ENCODE measurements at regions of chr2 and their contacts with region 1.

Region 1: GRCh38 chr2:74334931-74335333 is 8.3 kb downstream of the SLC4A5 start:
- DNase-seq: peak; percentile 9
- H3K4me3 ChIP-seq: no peak overlapping the region
- CTCF ChIP-seq: peak; percentile 94

Region 2: DNA sequence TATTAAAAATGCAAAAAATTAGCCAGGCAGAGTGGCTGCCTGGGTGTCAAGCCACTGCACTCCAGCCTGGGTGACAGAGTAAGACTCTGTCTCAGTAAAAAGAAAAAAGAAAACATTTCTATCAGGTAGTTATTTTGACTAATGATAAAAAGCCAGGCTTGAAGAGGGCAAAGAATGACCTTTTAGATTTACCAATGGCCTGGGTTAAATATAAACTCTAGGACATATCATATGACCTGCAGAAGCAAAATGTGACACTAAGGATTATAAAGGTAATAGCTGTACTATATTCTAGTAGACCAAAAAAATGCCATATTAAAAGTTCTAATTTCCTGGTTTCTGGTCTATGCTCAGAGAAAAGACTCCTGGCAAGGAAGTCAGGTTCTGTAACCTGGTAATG is 522.3 kb before region 1 on chr2:
- CTCF ChIA-PET with region 1: no interaction called
- POLR2A ChIA-PET with region 1: no interaction called
- DNase-seq: no peak
- H3K4me3 ChIP-seq: no peak overlapping the region
- CTCF ChIP-seq: no peak

Region 3: DNA sequence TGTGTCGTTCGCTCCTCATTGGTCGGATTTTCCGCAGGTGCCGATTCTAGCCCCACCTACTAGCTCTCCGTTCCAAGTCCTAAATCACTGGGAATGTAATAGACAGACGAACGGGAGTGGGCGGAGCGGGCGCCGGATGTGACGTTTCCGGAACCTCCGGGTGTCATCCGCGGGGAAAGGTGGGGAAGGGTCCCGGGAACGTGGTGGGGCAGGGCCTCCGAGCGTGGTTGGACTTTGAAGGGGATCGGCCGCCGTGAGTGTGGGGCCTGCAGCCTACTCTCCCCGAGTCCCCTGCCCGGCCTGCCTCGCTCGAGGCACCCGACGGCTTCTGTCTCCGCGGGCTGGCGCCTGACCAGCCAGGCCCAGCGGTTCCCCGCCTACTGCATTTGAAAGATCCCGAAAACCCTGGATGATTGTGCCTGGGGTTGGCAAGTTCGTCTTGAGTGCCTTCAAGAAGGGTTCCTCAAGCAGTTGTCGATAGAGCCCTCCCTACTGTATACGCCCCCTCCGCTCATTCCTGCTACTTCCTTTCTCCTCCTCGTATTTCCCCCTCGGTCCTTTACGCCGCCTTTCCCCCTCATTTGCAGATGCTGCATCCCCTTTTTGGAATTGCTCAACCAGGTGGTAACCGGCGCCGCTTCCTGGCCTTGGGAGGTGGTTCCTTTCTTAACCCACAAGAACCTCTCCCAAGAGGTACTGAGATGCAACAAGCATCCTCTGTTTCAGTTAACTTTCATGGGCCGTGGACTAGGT is 505.9 kb before region 1 on chr2 and contains the start of gene STAMBP:
- CTCF ChIA-PET with region 1: interaction called, 54 read pairs
- POLR2A ChIA-PET with region 1: no interaction called
- DNase-seq: peak; percentile 72
- H3K4me3 ChIP-seq: peak within 1 kb of the TSS; percentile 82
- CTCF ChIP-seq: no peak

Region 4: GRCh38 chr2:74198461-74199274 is 136.3 kb before region 1 on chr2 and contains the start of gene MTHFD2:
- CTCF ChIA-PET with region 1: no interaction called
- POLR2A ChIA-PET with region 1: no interaction called
- DNase-seq: peak; percentile 85
- H3K4me3 ChIP-seq: peak within 1 kb of the TSS; percentile 99
- CTCF ChIP-seq: peak; percentile 97

Region 5: DNA sequence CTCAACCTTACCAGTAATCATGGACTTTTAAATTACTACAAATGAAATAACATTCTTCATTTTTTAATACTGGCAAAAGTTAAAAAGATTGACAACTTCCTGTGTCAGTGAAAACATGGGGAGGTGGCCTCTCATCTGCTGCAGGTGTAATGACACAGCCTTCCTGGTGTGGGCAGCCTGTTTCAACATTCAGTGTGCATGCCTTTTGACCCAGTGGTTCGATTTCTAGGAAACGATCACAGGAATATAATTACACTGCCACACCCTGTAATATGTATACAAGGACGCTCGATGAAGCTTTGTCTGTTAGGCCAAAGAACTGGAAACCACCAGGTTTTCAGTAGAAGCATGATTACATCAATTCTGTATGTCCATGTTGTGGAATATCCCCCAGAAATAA is 67.9 kb before region 1 on chr2:
- CTCF ChIA-PET with region 1: interaction called, 19 read pairs
- POLR2A ChIA-PET with region 1: no interaction called
- DNase-seq: no peak
- H3K4me3 ChIP-seq: no peak overlapping the region
- CTCF ChIP-seq: no peak

Region 6: GRCh38 chr2:74357627-74358026 is 22.7 kb after region 1 on chr2:
- CTCF ChIA-PET with region 1: interaction called, 205 read pairs
- POLR2A ChIA-PET with region 1: no interaction called
- DNase-seq: no peak
- H3K4me3 ChIP-seq: no peak overlapping the region
- CTCF ChIP-seq: no peak

Region 7: DNA sequence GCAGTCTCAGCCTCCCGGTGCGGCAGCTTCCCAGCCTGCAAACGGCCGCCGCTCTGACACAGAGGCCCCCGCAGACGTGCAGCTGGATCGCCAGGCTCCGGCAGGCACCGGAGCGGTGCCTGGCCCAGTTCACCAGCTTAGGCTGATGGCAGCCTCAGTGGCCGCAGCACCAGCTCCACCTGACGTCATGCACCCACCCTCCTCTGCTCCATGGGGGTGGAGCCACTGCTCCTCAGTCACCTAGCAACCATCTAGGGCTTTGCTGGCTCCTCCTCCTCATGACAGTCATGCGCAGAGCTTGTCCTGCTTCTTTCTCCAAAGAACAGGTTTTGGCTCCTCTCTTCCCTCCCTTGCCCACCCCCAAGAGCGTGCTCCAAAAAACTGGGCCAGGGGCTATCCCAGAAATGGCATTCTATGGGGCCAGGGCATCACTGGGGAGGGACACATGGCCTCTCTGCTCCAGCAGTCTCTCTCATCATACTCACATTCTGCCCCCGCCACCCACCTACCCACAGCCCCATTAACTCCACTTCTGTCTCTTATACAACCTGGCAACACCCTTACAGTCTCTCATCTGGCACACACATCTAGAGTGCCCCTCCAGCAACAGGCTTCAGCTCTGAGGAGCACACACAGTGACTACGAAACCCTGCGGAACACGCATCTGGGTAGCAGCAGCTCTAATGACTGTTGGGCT is 39.7 kb after region 1 on chr2:
- CTCF ChIA-PET with region 1: interaction called, 27 read pairs
- POLR2A ChIA-PET with region 1: no interaction called
- DNase-seq: no peak
- H3K4me3 ChIP-seq: peak overlapping the region; percentile 23; the same call in 1 of the 2 replicates
- CTCF ChIP-seq: no peak

Region 8: DNA sequence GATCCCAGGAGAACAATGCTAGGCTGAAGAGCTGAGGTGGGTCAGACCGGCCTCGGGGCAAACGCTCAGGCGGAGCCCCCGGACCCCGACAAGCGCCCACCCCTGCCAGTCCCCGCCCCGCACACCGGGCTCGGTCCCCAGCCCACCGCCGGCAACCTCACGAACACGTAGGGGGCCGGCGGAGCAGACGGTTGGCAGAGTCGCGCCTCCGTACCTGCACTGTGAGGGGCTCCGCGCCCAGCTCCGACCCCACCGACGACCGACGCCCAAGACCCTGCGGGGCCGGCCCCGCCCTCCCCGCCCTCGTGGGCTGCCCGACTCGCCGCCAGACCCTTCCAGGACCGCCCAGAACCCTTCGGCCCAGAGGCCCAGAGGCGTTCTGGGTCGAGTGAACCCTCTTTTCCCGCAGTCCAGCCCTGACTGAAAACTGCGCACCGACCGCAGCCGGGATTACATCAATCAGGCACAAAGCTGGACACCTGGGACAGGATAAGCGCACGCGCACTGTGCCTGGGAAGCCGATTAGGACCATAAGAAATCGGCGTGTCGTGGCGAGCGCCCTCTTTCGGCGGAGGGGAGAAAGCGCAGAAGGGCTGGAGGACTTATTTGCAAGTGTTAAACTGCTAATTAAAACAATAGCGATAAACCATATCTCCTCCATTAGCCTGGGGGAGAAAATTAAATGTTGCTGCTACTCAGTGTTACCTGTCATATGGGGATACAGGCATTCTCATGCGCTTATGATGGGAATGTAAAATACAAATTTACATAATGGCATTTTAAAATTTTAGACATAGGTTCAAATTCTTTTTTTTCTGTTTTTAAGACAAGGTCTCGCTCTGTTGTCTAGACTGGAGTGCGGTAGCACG is 56.9 kb after region 1 on chr2:
- CTCF ChIA-PET with region 1: interaction called, 74 read pairs
- POLR2A ChIA-PET with region 1: no interaction called
- DNase-seq: peak; percentile 29
- H3K4me3 ChIP-seq: peak overlapping the region; percentile 72
- CTCF ChIP-seq: peak; percentile 90

Region 9: GRCh38 chr2:75241696-75242095 is 906.8 kb after region 1 on chr2:
- CTCF ChIA-PET with region 1: no interaction called
- POLR2A ChIA-PET with region 1: no interaction called
- DNase-seq: no peak
- H3K4me3 ChIP-seq: no peak overlapping the region
- CTCF ChIP-seq: no peak

Measured in AG04449 (cell line).